Activated CD8-positive, alpha-beta T cell treated with anti-CD3 and anti-CD28 coated beads, Interleukin-2, amount 10 ng/mL, durations not matched to agents 7 days and 5 days (primary cell): ENCODE measurements at regions of chrX and their contacts with region 1.

Region 1: DNA sequence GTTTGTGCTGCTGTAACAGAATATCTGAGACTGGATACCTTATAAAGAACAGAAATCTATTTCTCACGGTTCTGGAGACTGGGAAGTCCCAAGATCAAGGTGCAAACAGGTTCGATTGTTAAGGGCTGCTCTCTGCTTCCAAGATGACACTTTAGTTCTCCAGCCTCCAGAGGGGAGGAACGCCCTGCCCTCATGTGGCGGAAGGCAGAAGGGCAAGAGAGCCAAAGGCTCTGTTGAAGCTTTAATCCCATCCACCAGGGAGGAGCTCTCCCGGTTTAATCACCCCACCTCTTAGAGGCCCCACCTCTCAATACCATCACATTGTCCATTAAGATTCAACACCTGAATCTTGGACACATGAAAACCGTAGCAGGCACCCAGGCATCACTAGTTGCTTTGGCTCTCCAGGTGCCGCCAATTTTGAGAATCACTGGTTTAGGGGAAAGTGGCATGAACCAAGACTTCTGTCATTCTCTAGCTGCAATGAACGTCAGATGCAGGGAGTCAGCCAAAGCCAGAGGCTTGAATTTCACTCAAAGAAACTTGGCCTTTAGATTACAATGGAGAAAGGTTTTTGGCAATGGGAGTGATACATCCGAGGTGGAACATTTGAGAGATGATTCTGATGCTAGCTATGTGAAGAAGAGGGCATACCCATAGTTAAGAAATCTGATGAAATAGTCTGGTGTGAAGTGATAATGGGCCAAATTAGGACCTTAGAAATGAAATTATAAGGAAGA is 15.7 kb downstream of the FHL1 start:
- DNase-seq: peak; percentile 61
- ATAC-seq: peak; percentile 79
- H3K4me3 Mint-ChIP-seq: no peak overlapping the region
- H3K27ac Mint-ChIP-seq: no peak overlapping the region
- H3K4me1 Mint-ChIP-seq: peaks cover 6% of the 10 kb centered on the region
- H3K27me3 Mint-ChIP-seq: no peaks in the 10 kb centered on the region

Region 2: GRCh38 chrX:136200466-136200865 is 37.5 kb after region 1 on chrX:
- CTCF ChIA-PET with region 1: interaction called, 13 read pairs
- POLR2A ChIA-PET with region 1: no interaction called
- DNase-seq: peak; percentile 42
- ATAC-seq: peak; percentile 62
- H3K4me3 Mint-ChIP-seq: no peak overlapping the region
- H3K27ac Mint-ChIP-seq: no peak overlapping the region
- H3K4me1 Mint-ChIP-seq: peaks cover 36% of the 10 kb centered on the region
- H3K27me3 Mint-ChIP-seq: no peaks in the 10 kb centered on the region

Region 3: GRCh38 chrX:136209016-136209738 is 46.2 kb after region 1 on chrX:
- CTCF ChIA-PET with region 1: interaction called, 10 read pairs
- POLR2A ChIA-PET with region 1: no interaction called
- DNase-seq: peak; percentile 42
- ATAC-seq: peak; percentile 61
- H3K4me3 Mint-ChIP-seq: no peak overlapping the region
- H3K27ac Mint-ChIP-seq: no peak overlapping the region
- H3K4me1 Mint-ChIP-seq: peaks cover 11% of the 10 kb centered on the region
- H3K27me3 Mint-ChIP-seq: no peaks in the 10 kb centered on the region

Region 4: GRCh38 chrX:136549226-136549625 is 386.2 kb after region 1 on chrX:
- CTCF ChIA-PET with region 1: no interaction called
- POLR2A ChIA-PET with region 1: no interaction called
- DNase-seq: no peak
- ATAC-seq: no peak
- H3K4me3 Mint-ChIP-seq: no peak overlapping the region
- H3K27ac Mint-ChIP-seq: peak overlapping the region; percentile 23
- H3K4me1 Mint-ChIP-seq: peaks cover 51% of the 10 kb centered on the region
- H3K27me3 Mint-ChIP-seq: no peaks in the 10 kb centered on the region